CD8-positive, alpha-beta T cell (primary cell): ENCODE measurements at regions of chr19 and their contacts with region 1.

Region 1: GRCh38 chr19:58154679-58155648 is 4.4 kb upstream of the ZNF329 start:
- DNase-seq: peak; percentile 94 to 100 (median 99)
- ATAC-seq: peak; percentile 85
- H3K4me3 ChIP-seq: peak overlapping the region; percentile 69 to 99
- H3K4me3 Mint-ChIP-seq: peak overlapping the region; percentile 87
- H3K27ac ChIP-seq: peak overlapping the region; percentile 76 to 94
- H3K27ac Mint-ChIP-seq: peak overlapping the region; percentile 82
- H3K4me1 ChIP-seq: peaks cover 17% of the 10 kb centered on the region
- H3K4me1 Mint-ChIP-seq: peaks cover 25% of the 10 kb centered on the region
- H3K27me3 ChIP-seq: no peaks in the 10 kb centered on the region
- H3K27me3 Mint-ChIP-seq: no peaks in the 10 kb centered on the region
- CTCF ChIP-seq: peak; percentile 98

Region 2: GRCh38 chr19:56567274-56568120 is 1587.5 kb before region 1 on chr19 and contains the start of gene ZNF470:
- CTCF ChIA-PET with region 1: no interaction called
- POLR2A ChIA-PET with region 1: no interaction called
- intact Hi-C with region 1: loop called in 1 of 2 experiments (anchors 2 kb)
- DNase-seq: peak; percentile 71 to 92 (median 86)
- ATAC-seq: peak; percentile 97
- H3K4me3 ChIP-seq: peak within 1 kb of the TSS; percentile 81 to 97
- H3K4me3 Mint-ChIP-seq: peak within 1 kb of the TSS; percentile 98
- H3K27ac ChIP-seq: peak within 1 kb of the TSS; percentile 52 to 61
- H3K27ac Mint-ChIP-seq: peak within 1 kb of the TSS; percentile 84
- H3K4me1 ChIP-seq: peaks cover 6% of the 10 kb centered on the region
- H3K4me1 Mint-ChIP-seq: peaks cover 22% of the 10 kb centered on the region
- H3K27me3 ChIP-seq: no peaks in the 10 kb centered on the region
- H3K27me3 Mint-ChIP-seq: no peaks in the 10 kb centered on the region
- CTCF ChIP-seq: no peak
- total RNA-seq, gene ZNF470: 0.33 to 1.1 TPM

Region 3: GRCh38 chr19:57410877-57411671 is 743.9 kb before region 1 on chr19 and contains the start of gene ZNF17:
- CTCF ChIA-PET with region 1: interaction called, 8 read pairs
- POLR2A ChIA-PET with region 1: no interaction called
- intact Hi-C with region 1: loop called (anchors 1 kb)
- DNase-seq: peak; percentile 83 to 96 (median 91)
- ATAC-seq: peak; percentile 100
- H3K4me3 ChIP-seq: peak within 1 kb of the TSS; percentile 82 to 99
- H3K4me3 Mint-ChIP-seq: peak within 1 kb of the TSS; percentile 96
- H3K27ac ChIP-seq: peak within 1 kb of the TSS; percentile 67 to 83
- H3K27ac Mint-ChIP-seq: peak within 1 kb of the TSS; percentile 94
- H3K4me1 ChIP-seq: peaks cover 13% of the 10 kb centered on the region
- H3K4me1 Mint-ChIP-seq: peaks cover 35% of the 10 kb centered on the region
- H3K27me3 ChIP-seq: no peaks in the 10 kb centered on the region
- H3K27me3 Mint-ChIP-seq: no peaks in the 10 kb centered on the region
- CTCF ChIP-seq: no peak
- total RNA-seq, gene ZNF17: 15.5 to 18.3 TPM

Region 4: GRCh38 chr19:57583521-57584416 is 571.2 kb before region 1 on chr19 and contains the start of gene ZIK1:
- CTCF ChIA-PET with region 1: no interaction called
- POLR2A ChIA-PET with region 1: interaction called, 4 read pairs
- intact Hi-C with region 1: loop called (anchors 1 to 2 kb)
- DNase-seq: peak; percentile 75 to 95 (median 88)
- ATAC-seq: peak; percentile 87
- H3K4me3 ChIP-seq: peak within 1 kb of the TSS; percentile 59 to 67
- H3K4me3 Mint-ChIP-seq: peak within 1 kb of the TSS; percentile 98
- H3K27ac ChIP-seq: peak within 1 kb of the TSS; percentile 37 to 56
- H3K27ac Mint-ChIP-seq: peak within 1 kb of the TSS; percentile 91
- H3K4me1 ChIP-seq: peaks cover 21% of the 10 kb centered on the region
- H3K4me1 Mint-ChIP-seq: peaks cover 19% of the 10 kb centered on the region
- H3K27me3 ChIP-seq: no peaks in the 10 kb centered on the region
- H3K27me3 Mint-ChIP-seq: no peaks in the 10 kb centered on the region
- CTCF ChIP-seq: peak; percentile 12
- total RNA-seq, gene ZIK1: 10.0 to 12.8 TPM

Region 5: DNA sequence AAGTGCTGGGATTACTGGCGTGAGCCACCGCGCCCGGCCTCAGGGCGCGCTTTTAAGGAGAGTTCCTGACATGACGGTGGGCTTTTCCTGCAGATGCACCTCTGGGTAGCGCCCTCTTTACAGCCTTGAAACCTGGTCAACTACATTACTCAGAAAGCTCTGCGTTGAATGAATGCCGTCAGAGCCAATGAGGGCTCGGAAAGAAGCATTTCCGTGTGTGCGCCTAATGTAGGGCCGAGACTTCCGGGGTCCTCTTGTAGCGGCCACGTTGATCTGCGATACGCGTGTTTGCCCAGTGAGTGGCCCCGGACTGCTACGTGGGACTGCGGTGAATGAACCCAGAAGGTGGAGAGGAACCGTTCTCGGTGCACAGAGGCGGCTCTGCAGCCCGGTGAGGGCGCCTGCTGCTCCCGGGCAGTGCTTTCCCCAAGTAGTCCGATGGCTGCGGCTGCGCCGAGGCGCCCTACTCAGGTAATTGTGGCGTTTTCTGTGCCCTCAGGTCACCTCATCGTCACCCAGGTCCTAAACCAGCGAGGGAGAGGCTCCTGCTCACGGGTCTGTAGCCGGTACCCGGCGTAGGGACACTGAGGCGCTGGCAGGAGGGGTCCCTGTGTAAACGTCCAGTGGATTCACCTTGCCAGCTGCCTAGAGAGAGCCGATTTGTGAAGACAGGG is 335.4 kb before region 1 on chr19:
- CTCF ChIA-PET with region 1: no interaction called
- POLR2A ChIA-PET with region 1: no interaction called
- intact Hi-C with region 1: loop called in 1 of 2 experiments (anchors 1 kb)
- DNase-seq: peak; percentile 60 to 95 (median 81)
- ATAC-seq: peak; percentile 83
- H3K4me3 ChIP-seq: peak overlapping the region; percentile 57 to 85
- H3K4me3 Mint-ChIP-seq: peak overlapping the region; percentile 96
- H3K27ac ChIP-seq: peak overlapping the region; percentile 81 to 89
- H3K27ac Mint-ChIP-seq: peak overlapping the region; percentile 97
- H3K4me1 ChIP-seq: peaks cover 15% of the 10 kb centered on the region
- H3K4me1 Mint-ChIP-seq: peaks cover 63% of the 10 kb centered on the region
- H3K27me3 ChIP-seq: no peaks in the 10 kb centered on the region
- H3K27me3 Mint-ChIP-seq: no peaks in the 10 kb centered on the region
- CTCF ChIP-seq: no peak

Region 6: DNA sequence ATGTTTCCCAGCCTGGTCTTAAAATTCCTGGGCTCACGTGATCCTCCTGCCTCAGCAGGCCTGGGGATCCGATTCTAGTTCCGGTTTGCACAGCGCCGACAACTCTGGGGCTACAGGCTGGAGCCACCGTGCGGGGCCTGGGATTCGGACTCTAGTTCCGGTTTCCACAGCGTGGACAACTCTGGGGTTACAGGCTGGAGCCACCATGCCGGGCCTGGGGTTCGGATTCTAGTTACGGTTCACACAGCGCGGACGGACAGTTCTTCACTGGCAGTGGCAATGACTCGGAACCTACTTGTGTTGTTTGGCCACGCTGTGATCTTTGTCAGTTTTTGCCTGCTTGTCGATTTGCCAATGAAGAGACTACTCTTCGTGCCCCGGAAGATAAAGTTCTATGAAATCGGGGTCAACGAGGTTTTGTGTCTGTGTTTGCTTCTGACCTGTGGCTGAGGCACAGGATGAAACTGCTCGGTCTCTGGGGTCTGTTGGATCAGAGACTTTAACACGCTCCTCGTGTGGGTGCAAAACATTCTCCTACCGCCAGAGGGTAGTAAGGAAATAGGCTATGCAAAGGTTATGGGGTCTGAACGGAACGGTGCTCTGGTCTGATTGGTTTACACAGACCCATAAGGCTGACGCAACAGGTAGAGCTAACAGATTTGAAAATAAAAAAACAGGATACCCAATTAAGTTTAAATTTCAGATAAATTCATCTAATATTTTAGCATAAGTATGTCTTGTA is 133.3 kb before region 1 on chr19:
- CTCF ChIA-PET with region 1: interaction called, 6 read pairs
- POLR2A ChIA-PET with region 1: no interaction called
- intact Hi-C with region 1: loop called in 1 of 2 experiments (anchors 1 kb)
- DNase-seq: peak in 6 of 9 experiments; percentile 12 to 76 (median 56)
- ATAC-seq: peak; percentile 100
- H3K4me3 ChIP-seq: no peak overlapping the region
- H3K4me3 Mint-ChIP-seq: no peak overlapping the region
- H3K27ac ChIP-seq: no peak overlapping the region
- H3K27ac Mint-ChIP-seq: no peak overlapping the region
- H3K4me1 ChIP-seq: no peaks in the 10 kb centered on the region
- H3K4me1 Mint-ChIP-seq: peaks cover 4% of the 10 kb centered on the region
- H3K27me3 ChIP-seq: no peaks in the 10 kb centered on the region
- H3K27me3 Mint-ChIP-seq: peaks cover 11% of the 10 kb centered on the region
- CTCF ChIP-seq: peak; percentile 47

Region 7: DNA sequence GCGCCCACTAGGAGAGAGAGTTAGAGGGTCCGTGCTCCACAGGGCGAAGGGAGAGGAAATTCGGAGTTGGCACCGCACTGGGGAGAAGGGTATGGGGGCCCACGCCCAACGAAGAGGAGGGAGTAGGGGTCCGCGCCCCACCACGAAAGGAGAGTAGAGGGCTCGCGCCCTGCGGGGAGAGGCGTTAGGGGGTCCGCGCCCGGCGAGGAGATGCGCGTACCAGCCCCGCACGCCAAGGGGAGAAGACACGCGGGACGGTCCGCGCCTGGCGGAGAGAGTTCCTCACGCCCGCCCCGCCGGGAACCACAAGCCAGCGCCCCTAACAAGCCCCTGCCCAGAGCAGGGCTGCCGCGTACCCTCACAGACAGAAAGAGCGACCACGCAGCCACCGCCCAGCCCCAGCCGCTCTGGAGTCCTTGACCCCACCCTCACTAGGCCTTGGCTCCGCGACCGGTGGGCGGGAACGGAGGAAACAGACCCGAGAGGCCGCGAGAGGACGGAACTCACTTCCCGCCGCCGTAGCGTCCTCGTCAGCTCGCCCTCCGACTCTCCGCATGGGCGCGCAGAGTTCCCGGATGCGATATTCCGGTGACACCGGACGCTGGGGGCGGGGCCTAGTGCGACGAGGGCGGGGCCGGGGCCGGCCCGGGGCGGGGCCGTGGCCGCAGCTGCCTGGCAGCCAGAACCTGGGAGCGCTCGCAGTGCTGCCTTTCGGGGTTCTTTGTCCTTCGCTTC is 37.0 kb before region 1 on chr19:
- CTCF ChIA-PET with region 1: no interaction called
- POLR2A ChIA-PET with region 1: no interaction called
- intact Hi-C with region 1: no loop called
- DNase-seq: no peak
- ATAC-seq: no peak
- H3K4me3 ChIP-seq: no peak overlapping the region
- H3K4me3 Mint-ChIP-seq: no peak overlapping the region
- H3K27ac ChIP-seq: no peak overlapping the region
- H3K27ac Mint-ChIP-seq: no peak overlapping the region
- H3K4me1 ChIP-seq: no peaks in the 10 kb centered on the region
- H3K4me1 Mint-ChIP-seq: peaks cover 1% of the 10 kb centered on the region
- H3K27me3 ChIP-seq: no peaks in the 10 kb centered on the region
- H3K27me3 Mint-ChIP-seq: peaks cover 18% of the 10 kb centered on the region
- CTCF ChIP-seq: no peak

Region 8: GRCh38 chr19:58338825-58339558 is 184.0 kb after region 1 on chr19:
- CTCF ChIA-PET with region 1: no interaction called
- POLR2A ChIA-PET with region 1: no interaction called
- intact Hi-C with region 1: no loop called
- DNase-seq: no peak
- ATAC-seq: no peak
- H3K4me3 ChIP-seq: no peak overlapping the region
- H3K4me3 Mint-ChIP-seq: no peak overlapping the region
- H3K27ac ChIP-seq: no peak overlapping the region
- H3K27ac Mint-ChIP-seq: no peak overlapping the region
- H3K4me1 ChIP-seq: no peaks in the 10 kb centered on the region
- H3K4me1 Mint-ChIP-seq: peaks cover 14% of the 10 kb centered on the region
- H3K27me3 ChIP-seq: no peaks in the 10 kb centered on the region
- H3K27me3 Mint-ChIP-seq: no peaks in the 10 kb centered on the region
- CTCF ChIP-seq: no peak